ENCODE measurements at regions of chr9 and their contacts with region 1.

Region 1: GRCh38 chr9:22119537-22120158 is 110.5 kb upstream of the CDKN2B start:
- DNase-seq: no peak
- H3K4me3 Mint-ChIP-seq: no peak overlapping the region
- H3K27ac Mint-ChIP-seq: no peak overlapping the region
- H3K4me1 Mint-ChIP-seq: peaks cover 23% of the 10 kb centered on the region
- H3K27me3 Mint-ChIP-seq: peaks cover 53% of the 10 kb centered on the region

Region 2: GRCh38 chr9:21812946-21813568 is 306.6 kb before region 1 on chr9:
- intact Hi-C with region 1: loop called (anchors 1 kb)
- DNase-seq: peak; percentile 47
- H3K4me3 Mint-ChIP-seq: no peak overlapping the region
- H3K27ac Mint-ChIP-seq: peak overlapping the region; percentile 5
- H3K4me1 Mint-ChIP-seq: peaks cover 28% of the 10 kb centered on the region
- H3K27me3 Mint-ChIP-seq: no peaks in the 10 kb centered on the region

Region 3: DNA sequence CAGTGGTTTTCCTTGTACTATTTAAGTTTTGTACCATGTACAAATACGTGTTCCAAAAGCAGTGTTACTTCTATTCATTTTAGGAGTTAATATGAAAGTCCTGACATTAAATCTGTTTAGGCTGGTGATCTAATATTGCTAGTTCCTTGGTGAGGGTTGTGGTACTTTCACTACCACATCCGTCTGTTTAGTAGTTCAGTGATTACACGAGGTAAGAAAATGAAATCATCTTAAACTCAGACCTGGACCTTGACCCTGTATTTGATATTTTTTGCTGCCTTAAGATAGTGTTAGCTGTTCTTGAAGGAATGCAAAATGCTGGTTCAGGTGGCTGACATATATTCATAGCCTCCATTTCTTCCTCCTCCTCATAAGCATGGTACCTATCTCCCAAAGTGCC is 266.9 kb before region 1 on chr9:
- intact Hi-C with region 1: no loop called
- DNase-seq: no peak
- H3K4me3 Mint-ChIP-seq: no peak overlapping the region
- H3K27ac Mint-ChIP-seq: no peak overlapping the region
- H3K4me1 Mint-ChIP-seq: peaks cover 33% of the 10 kb centered on the region
- H3K27me3 Mint-ChIP-seq: no peaks in the 10 kb centered on the region

Region 4: GRCh38 chr9:21995177-21996086 is 124.2 kb before region 1 on chr9:
- intact Hi-C with region 1: loop called (anchors 1 kb)
- DNase-seq: peak; percentile 80
- H3K4me3 Mint-ChIP-seq: peak overlapping the region; percentile 94
- H3K27ac Mint-ChIP-seq: peak overlapping the region; percentile 97
- H3K4me1 Mint-ChIP-seq: peaks cover 39% of the 10 kb centered on the region
- H3K27me3 Mint-ChIP-seq: peaks cover 45% of the 10 kb centered on the region

Region 5: GRCh38 chr9:22037954-22038690 is 81.5 kb before region 1 on chr9:
- intact Hi-C with region 1: loop called (anchors 2 kb)
- DNase-seq: no peak
- H3K4me3 Mint-ChIP-seq: no peak overlapping the region
- H3K27ac Mint-ChIP-seq: no peak overlapping the region
- H3K4me1 Mint-ChIP-seq: peaks cover 41% of the 10 kb centered on the region
- H3K27me3 Mint-ChIP-seq: peaks cover 30% of the 10 kb centered on the region

Region 6: DNA sequence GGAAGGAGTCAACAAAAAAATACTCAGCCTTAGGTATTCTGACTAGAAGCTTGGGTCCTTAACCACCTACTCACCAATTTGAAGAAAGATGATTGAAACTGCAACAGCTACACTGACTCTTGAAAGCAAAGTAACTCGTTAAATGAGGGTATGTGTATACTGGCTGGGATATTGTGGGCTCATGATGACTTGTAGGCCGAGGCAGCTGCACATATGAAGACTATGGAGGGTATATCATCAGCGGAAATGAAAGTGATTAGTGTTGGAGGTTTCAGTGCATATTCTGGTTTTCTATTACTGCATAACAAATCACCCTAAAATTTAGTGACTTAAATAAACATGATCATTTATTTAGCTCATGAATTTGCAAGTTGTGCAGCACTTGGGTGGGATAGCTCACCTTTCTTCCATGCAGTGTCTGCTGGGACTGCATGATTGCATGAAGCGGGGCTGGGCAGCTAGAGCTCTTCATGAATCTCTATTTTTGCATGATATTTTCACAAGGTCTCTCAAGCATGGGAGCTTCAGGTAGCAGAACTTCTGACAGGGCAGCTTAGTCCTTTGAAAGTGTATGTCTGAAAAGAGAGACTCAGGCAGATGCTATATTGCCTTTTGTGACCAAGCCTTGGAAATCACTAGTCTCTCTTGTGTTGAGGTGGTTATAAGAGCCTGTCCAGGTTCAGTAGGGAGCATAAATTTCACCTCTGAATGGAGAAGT is 14.5 kb before region 1 on chr9:
- intact Hi-C with region 1: loop called (anchors 2 kb)
- DNase-seq: no peak
- H3K4me3 Mint-ChIP-seq: no peak overlapping the region
- H3K27ac Mint-ChIP-seq: no peak overlapping the region
- H3K4me1 Mint-ChIP-seq: peaks cover 47% of the 10 kb centered on the region
- H3K27me3 Mint-ChIP-seq: peaks cover 27% of the 10 kb centered on the region

Region 7: DNA sequence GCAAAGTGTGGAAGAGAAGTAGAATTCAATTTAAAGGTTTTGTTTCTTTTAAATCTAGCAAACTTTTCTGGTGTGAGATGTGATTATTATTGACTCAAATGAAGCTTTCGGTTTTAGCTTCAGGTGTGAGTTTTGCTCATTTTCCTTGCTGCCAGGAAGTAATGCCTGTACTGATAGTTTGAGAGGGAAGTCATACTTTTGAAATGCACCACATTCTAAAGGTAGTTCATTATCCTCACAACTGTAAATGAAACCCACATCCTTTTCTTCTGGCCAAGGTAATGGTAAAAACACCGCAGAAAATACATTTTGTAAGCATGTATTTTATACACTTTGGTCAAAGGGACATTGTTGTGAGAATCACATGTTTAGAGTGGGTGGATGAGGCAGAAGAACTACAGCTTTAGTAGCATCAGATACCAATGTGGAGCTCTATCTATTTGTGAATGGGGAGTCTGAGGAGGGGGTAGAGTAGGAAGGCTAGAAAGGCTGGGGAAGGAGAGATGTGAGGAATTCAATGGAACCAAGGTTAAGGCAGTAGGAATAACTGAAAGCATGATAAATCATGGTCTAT is 56.4 kb after region 1 on chr9:
- intact Hi-C with region 1: loop called (anchors 5 kb)
- DNase-seq: peak; percentile 5
- H3K4me3 Mint-ChIP-seq: peak overlapping the region; percentile 1
- H3K27ac Mint-ChIP-seq: peak overlapping the region; percentile 51
- H3K4me1 Mint-ChIP-seq: peaks cover 30% of the 10 kb centered on the region
- H3K27me3 Mint-ChIP-seq: peaks cover 10% of the 10 kb centered on the region

Region 8: DNA sequence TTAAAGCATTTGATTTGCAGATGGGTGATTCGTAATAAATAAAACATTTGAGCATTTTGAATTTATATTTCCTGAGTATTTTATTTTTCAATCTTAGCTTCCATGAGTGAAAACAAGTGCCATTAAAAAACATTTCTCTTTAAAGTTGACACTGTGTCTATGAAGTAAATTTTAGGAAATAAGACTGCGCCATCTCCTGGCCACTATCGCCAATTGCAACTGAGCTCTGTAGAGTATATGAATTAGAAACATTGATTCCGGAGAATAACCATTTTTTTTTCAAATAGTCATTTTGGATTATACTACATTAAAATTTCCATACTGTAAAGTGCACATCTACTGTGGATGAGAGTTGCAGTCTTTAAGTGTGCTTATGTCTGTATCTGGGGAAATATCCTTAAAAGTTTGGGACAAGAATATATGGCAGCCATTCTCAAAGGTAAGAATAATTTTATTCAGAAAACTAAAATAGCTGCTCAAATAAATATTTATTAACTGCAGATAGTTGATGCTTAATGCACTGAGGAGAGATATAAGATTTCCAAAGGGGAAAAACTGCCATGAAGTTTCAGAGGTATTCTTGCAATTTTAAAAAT is 332.9 kb after region 1 on chr9:
- intact Hi-C with region 1: loop called (anchors 10 kb)
- DNase-seq: no peak
- H3K4me3 Mint-ChIP-seq: no peak overlapping the region
- H3K27ac Mint-ChIP-seq: no peak overlapping the region
- H3K4me1 Mint-ChIP-seq: no peaks in the 10 kb centered on the region
- H3K27me3 Mint-ChIP-seq: peaks cover 24% of the 10 kb centered on the region